ENCODE measurements at regions of chr16 and their contacts with region 1.

Region 1: GRCh38 chr16:28846080-28846932 is at the start of gene TUFM:
- H3K4me3 Mint-ChIP-seq: peak within 1 kb of the TSS; percentile 96
- H3K27ac Mint-ChIP-seq: peak within 1 kb of the TSS; percentile 96
- H3K4me1 Mint-ChIP-seq: peaks cover 30% of the 10 kb centered on the region
- H3K27me3 Mint-ChIP-seq: no peaks in the 10 kb centered on the region

Region 2: GRCh38 chr16:28823872-28824716 is 22.2 kb before region 1 on chr16:
- intact Hi-C with region 1: loop called (anchors 1 kb)
- H3K4me3 Mint-ChIP-seq: peak overlapping the region; percentile 97
- H3K27ac Mint-ChIP-seq: peak overlapping the region; percentile 94
- H3K4me1 Mint-ChIP-seq: peaks cover 45% of the 10 kb centered on the region
- H3K27me3 Mint-ChIP-seq: no peaks in the 10 kb centered on the region

Region 3: GRCh38 chr16:28863929-28864793 is 17.9 kb after region 1 on chr16:
- intact Hi-C with region 1: loop called (anchors 1 kb)
- H3K4me3 Mint-ChIP-seq: peak overlapping the region; percentile 89
- H3K27ac Mint-ChIP-seq: peak overlapping the region; percentile 96
- H3K4me1 Mint-ChIP-seq: peaks cover 26% of the 10 kb centered on the region
- H3K27me3 Mint-ChIP-seq: no peaks in the 10 kb centered on the region

Region 4: GRCh38 chr16:28882551-28883160 is 36.4 kb after region 1 on chr16:
- intact Hi-C with region 1: no loop called
- H3K4me3 Mint-ChIP-seq: no peak overlapping the region
- H3K27ac Mint-ChIP-seq: no peak overlapping the region
- H3K4me1 Mint-ChIP-seq: peaks cover 19% of the 10 kb centered on the region
- H3K27me3 Mint-ChIP-seq: peaks cover 37% of the 10 kb centered on the region